SK-N-SH (cell line): ENCODE measurements at regions of chr15 and their contacts with region 1.

Region 1: GRCh38 chr15:74540761-74541493 is at the start of gene ARID3B:
- DNase-seq: peak; percentile 97
- H3K4me3 ChIP-seq: peak within 1 kb of the TSS; percentile 80 to 86
- H3K27ac ChIP-seq: peak within 1 kb of the TSS; percentile 60 to 78
- H3K4me1 ChIP-seq: peaks cover 7 to 22% of the 10 kb centered on the region in 2 experiments
- H3K27me3 ChIP-seq: no peaks in the 10 kb centered on the region
- CTCF ChIP-seq: no peak
- EP300 ChIP-seq: no peak
- RAD21 ChIP-seq: no peak; the same call in 1 of the 2 replicates
- polyA plus RNA-seq, gene ARID3B: 3.0 and 3.7 TPM in 2 replicates

Region 2: DNA sequence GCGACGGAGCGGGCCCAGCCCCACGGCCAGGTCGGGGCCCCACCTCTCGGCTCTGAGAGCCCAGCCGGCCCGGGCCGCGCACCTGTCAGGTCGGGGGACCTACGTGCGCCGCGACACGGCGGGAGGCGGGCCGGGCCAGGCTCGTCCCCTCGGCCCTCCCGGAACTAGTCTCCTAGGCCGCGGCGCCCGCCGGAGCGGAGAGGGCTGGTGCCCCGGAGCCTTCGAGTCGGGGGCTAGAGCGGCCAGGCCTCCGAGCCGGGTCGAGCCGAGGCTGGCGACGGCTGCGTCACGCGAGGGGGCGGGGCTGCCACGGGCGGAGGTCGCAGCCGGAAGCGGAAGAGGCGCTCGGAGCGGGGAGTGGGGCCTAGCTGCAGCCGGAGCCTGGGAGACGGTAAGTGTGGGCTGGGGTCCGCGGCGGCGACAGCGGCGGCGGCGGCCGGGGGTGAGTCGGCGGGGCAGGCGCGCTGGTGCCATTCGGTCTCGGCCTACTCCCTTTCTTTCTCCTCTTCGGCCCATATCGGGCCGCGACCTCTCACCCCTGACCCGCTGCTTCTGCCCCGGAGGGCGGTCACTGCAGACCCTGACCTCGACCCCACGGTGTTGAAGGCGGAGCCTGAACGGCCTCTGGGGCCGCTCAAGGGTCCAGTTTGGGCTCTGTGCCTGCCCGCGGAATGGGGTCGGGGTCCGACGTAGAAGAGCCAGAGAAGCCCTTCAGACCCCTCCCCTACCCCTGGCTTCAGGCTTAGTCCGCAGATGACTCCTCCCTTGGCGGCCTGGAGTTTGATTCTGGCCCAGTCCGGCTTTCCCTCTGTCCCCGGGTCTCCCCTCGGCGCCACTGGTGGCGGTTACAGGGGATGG is 74.8 kb after region 1 on chr15 and contains the start of gene CLK3:
- CTCF ChIA-PET with region 1: interaction called, 15 read pairs
- POLR2A ChIA-PET with region 1: interaction called, 33 read pairs
- DNase-seq: peak; percentile 99
- H3K4me3 ChIP-seq: peak within 1 kb of the TSS; percentile 98 to 99
- H3K27ac ChIP-seq: peak within 1 kb of the TSS; percentile 92 to 95
- H3K4me1 ChIP-seq: peaks cover 0 to 28% of the 10 kb centered on the region in 2 experiments; a peak in 2 of 4 replicates
- H3K27me3 ChIP-seq: no peaks in the 10 kb centered on the region
- CTCF ChIP-seq: no peak
- EP300 ChIP-seq: peak in 1 of 2 experiments; percentile 49; a peak in 1 of 4 replicates
- RAD21 ChIP-seq: no peak
- polyA plus RNA-seq, gene CLK3: 67.7 and 72.4 TPM in 2 replicates